CD4-positive, alpha-beta T cell (primary cell): ENCODE measurements at regions of chr17 and their contacts with region 1.

Region 1: GRCh38 chr17:4908301-4908700 is 5.4 kb upstream of the CHRNE start:
- DNase-seq: peak in 2 of 14 experiments; percentile 30 to 51
- ATAC-seq: no peak
- H3K4me3 ChIP-seq: no peak overlapping the region
- H3K4me3 Mint-ChIP-seq: no peak overlapping the region
- H3K27ac ChIP-seq: no peak overlapping the region
- H3K27ac Mint-ChIP-seq: no peak overlapping the region
- H3K4me1 ChIP-seq: peaks cover 24% of the 10 kb centered on the region
- H3K4me1 Mint-ChIP-seq: peaks cover 5% of the 10 kb centered on the region
- H3K27me3 ChIP-seq: no peaks in the 10 kb centered on the region
- H3K27me3 Mint-ChIP-seq: no peaks in the 10 kb centered on the region
- CTCF ChIP-seq: no peak

Region 2: GRCh38 chr17:4986951-4987766 is 78.9 kb after region 1 on chr17 and contains the start of gene CAMTA2:
- CTCF ChIA-PET with region 1: interaction called, 12 read pairs
- POLR2A ChIA-PET with region 1: interaction called, 7 read pairs
- intact Hi-C with region 1: loop called (anchors 1 to 2 kb)
- DNase-seq: peak; percentile 74 to 92 (median 86)
- ATAC-seq: peak; percentile 90
- H3K4me3 ChIP-seq: peak within 1 kb of the TSS; percentile 99
- H3K4me3 Mint-ChIP-seq: peak within 1 kb of the TSS; percentile 94
- H3K27ac ChIP-seq: peak within 1 kb of the TSS; percentile 90 to 92
- H3K27ac Mint-ChIP-seq: peak within 1 kb of the TSS; percentile 87
- H3K4me1 ChIP-seq: peaks cover 36% of the 10 kb centered on the region
- H3K4me1 Mint-ChIP-seq: peaks cover 40% of the 10 kb centered on the region
- H3K27me3 ChIP-seq: no peaks in the 10 kb centered on the region
- H3K27me3 Mint-ChIP-seq: no peaks in the 10 kb centered on the region
- CTCF ChIP-seq: peak; percentile 91
- total RNA-seq, gene CAMTA2: 41.6 to 51.3 TPM

Region 3: DNA sequence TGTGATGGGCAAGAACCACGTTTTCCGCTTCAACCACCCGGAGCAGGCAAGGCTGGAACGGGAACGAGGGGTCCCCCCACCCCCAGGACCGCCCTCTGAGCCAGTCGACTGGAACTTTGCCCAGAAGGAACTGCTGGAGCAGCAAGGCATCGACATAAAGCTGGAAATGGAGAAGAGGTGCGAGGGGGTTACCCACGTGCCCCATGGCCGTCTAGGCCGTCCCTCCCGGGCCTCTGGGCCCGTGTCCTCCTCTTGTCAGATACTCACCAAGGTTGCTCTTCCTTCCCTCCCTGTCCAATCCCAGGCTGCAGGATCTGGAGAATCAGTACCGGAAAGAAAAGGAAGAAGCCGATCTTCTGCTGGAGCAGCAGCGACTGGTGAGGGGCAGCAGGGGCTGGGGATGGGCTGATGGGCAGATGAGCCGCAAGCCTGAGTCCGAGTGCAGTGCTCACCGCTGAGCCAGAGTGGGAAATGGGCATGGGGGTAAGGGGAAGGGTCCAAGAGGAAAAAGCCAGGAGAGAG is 112.3 kb after region 1 on chr17:
- CTCF ChIA-PET with region 1: no interaction called
- POLR2A ChIA-PET with region 1: no interaction called
- intact Hi-C with region 1: loop called in 1 of 2 experiments (anchors 1 kb)
- DNase-seq: no peak
- ATAC-seq: no peak
- H3K4me3 ChIP-seq: no peak overlapping the region
- H3K4me3 Mint-ChIP-seq: no peak overlapping the region
- H3K27ac ChIP-seq: no peak overlapping the region
- H3K27ac Mint-ChIP-seq: no peak overlapping the region
- H3K4me1 ChIP-seq: no peaks in the 10 kb centered on the region
- H3K4me1 Mint-ChIP-seq: peaks cover 4% of the 10 kb centered on the region
- H3K27me3 ChIP-seq: no peaks in the 10 kb centered on the region
- H3K27me3 Mint-ChIP-seq: no peaks in the 10 kb centered on the region
- CTCF ChIP-seq: no peak

Region 4: GRCh38 chr17:5065227-5065744 is 157.0 kb after region 1 on chr17:
- CTCF ChIA-PET with region 1: interaction called, 7 read pairs
- POLR2A ChIA-PET with region 1: no interaction called
- intact Hi-C with region 1: loop called (anchors 1 kb)
- DNase-seq: no peak
- ATAC-seq: no peak
- H3K4me3 ChIP-seq: no peak overlapping the region
- H3K4me3 Mint-ChIP-seq: no peak overlapping the region
- H3K27ac ChIP-seq: no peak overlapping the region
- H3K27ac Mint-ChIP-seq: no peak overlapping the region
- H3K4me1 ChIP-seq: peaks cover 4% of the 10 kb centered on the region
- H3K4me1 Mint-ChIP-seq: peaks cover 5% of the 10 kb centered on the region
- H3K27me3 ChIP-seq: no peaks in the 10 kb centered on the region
- H3K27me3 Mint-ChIP-seq: no peaks in the 10 kb centered on the region
- CTCF ChIP-seq: no peak

Region 5: DNA sequence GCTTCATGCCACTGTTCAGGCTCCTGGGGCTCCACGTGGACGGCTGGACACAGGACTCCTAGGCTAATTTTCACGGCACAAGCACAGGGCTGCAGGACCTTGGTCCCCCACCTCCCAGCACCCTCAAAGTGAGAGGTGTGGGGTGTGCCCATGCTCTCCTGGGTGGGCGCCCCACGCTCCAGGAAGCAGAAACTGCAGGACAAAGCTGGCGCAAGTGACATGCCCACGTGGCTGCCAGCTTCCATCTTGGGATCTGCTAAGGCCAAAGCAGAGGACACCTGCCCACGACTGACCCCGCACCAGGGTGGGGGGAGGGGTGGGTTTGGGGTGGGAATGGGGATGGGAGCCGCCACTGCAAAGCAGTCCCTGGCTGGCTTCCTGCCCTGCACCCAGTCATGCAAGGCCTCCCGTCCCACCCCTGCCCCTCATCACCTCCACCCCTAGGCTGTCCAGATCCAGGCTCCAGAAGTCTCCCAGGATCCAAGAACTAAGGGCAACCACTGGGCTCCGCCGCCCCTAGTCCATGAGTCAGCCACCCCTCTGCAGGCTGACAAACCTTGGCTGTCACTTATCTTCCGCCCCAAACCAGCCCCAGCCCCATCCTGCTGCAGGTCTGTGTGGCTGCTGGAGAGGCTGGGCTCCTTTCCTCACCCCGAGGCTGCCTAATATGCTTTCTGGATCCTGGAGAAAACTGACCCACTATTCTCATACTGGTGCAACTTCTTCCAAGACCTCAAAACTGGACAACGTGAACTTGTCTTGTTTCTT is 218.6 kb after region 1 on chr17:
- CTCF ChIA-PET with region 1: no interaction called
- POLR2A ChIA-PET with region 1: no interaction called
- intact Hi-C with region 1: no loop called
- DNase-seq: peak in 2 of 14 experiments; percentile 1 to 28
- ATAC-seq: no peak
- H3K4me3 ChIP-seq: no peak overlapping the region
- H3K4me3 Mint-ChIP-seq: no peak overlapping the region
- H3K27ac ChIP-seq: no peak overlapping the region
- H3K27ac Mint-ChIP-seq: no peak overlapping the region
- H3K4me1 ChIP-seq: peaks cover 5% of the 10 kb centered on the region
- H3K4me1 Mint-ChIP-seq: no peaks in the 10 kb centered on the region
- H3K27me3 ChIP-seq: peaks cover 16 to 17% of the 10 kb centered on the region in 2 experiments
- H3K27me3 Mint-ChIP-seq: peaks cover 46% of the 10 kb centered on the region
- CTCF ChIP-seq: no peak